Activated CD4-positive, alpha-beta T cell treated with anti-CD3 and anti-CD28 coated beads, Interleukin-2, amount 10 ng/mL, durations not matched to agents 7 days and 5 days (primary cell): ENCODE measurements at regions of chr11 and their contacts with region 1.

Region 1: DNA sequence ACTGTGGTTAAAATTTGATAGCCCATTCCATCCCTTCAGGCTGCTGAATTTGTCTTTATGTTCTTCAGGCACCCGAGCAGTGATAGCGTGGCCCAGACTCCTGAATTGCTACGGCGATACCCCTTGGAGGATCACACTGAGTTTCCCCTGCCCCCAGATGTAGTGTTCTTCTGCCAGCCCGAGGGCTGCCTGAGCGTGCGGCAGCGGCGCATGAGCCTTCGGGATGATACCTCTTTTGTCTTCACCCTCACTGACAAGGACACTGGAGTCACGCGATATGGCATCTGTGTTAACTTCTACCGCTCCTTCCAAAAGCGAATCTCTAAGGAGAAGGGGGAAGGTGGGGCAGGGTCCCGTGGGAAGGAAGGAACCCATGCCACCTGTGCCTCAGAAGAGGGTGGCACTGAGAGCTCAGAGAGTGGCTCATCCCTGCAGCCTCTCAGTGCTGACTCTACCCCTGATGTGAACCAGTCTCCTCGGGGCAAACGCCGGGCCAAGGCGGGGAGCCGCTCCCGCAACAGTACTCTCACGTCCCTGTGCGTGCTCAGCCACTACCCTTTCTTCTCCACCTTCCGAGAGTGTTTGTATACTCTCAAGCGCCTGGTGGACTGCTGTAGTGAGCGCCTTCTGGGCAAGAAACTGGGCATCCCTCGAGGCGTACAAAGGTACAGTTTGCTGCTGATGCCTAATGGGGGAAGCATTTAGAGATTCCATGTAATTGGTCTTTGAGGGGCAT is 4.7 kb downstream of the MADD start:
- DNase-seq: no peak
- H3K4me3 Mint-ChIP-seq: no peak overlapping the region
- H3K27ac Mint-ChIP-seq: no peak overlapping the region
- H3K4me1 Mint-ChIP-seq: peaks cover 29% of the 10 kb centered on the region
- H3K27me3 Mint-ChIP-seq: no peaks in the 10 kb centered on the region

Region 2: DNA sequence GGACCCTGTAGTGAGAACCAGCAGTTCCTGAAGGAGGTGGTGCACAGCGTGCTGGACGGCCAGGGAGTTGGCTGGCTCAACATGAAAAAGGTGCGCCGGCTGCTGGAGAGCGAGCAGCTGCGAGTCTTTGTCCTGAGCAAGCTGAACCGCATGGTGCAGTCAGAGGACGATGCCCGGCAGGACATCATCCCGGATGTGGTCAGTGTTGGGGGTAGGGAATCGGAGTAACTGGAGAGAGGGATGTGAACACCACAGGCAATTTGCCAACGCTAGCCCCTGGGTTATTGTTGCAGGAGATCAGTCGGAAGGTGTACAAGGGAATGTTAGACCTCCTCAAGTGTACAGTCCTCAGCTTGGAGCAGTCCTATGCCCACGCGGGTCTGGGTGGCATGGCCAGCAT is 15.2 kb after region 1 on chr11:
- CTCF ChIA-PET with region 1: interaction called, 10 read pairs
- POLR2A ChIA-PET with region 1: no interaction called
- DNase-seq: no peak
- H3K4me3 Mint-ChIP-seq: no peak overlapping the region
- H3K27ac Mint-ChIP-seq: no peak overlapping the region
- H3K4me1 Mint-ChIP-seq: no peaks in the 10 kb centered on the region
- H3K27me3 Mint-ChIP-seq: no peaks in the 10 kb centered on the region